PC-9 (cell line): ENCODE measurements at regions of chr1 and their contacts with region 1.

Region 1: DNA sequence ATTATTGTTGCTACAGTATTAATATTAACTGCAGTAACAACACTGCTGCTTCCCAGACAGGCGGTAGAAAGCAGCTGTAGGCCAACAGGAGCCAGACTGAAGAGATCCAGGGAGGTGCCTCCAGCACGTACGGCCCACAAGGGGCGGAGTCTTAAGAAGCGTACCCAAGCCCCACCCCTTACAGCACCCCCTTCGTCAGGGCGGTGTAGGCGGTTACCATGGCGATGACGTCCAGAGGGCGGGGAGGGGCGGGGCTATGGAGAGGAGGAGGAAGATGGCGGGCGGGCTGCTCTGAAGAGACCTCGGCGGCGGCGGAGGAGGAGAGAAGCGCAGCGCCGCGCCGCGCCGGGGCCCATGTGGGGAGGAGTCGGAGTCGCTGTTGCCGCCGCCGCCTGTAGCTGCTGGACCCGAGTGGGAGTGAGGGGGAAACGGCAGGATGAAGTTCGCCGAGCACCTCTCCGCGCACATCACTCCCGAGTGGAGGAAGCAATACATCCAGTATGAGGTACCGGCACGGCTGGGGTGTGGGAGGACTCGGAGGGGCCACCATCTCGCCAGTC is at the start of gene XPR1:
- DNase-seq: peak; percentile 92 to 96
- H3K4me3 ChIP-seq: peak within 1 kb of the TSS; percentile 73
- H3K27ac ChIP-seq: no peak within 1 kb of the TSS
- H3K4me1 ChIP-seq: peaks cover 14% of the 10 kb centered on the region
- H3K27me3 ChIP-seq: no peaks in the 10 kb centered on the region
- CTCF ChIP-seq: no peak
- total RNA-seq, gene XPR1: 10.4 and 16.8 TPM in 2 replicates

Region 2: DNA sequence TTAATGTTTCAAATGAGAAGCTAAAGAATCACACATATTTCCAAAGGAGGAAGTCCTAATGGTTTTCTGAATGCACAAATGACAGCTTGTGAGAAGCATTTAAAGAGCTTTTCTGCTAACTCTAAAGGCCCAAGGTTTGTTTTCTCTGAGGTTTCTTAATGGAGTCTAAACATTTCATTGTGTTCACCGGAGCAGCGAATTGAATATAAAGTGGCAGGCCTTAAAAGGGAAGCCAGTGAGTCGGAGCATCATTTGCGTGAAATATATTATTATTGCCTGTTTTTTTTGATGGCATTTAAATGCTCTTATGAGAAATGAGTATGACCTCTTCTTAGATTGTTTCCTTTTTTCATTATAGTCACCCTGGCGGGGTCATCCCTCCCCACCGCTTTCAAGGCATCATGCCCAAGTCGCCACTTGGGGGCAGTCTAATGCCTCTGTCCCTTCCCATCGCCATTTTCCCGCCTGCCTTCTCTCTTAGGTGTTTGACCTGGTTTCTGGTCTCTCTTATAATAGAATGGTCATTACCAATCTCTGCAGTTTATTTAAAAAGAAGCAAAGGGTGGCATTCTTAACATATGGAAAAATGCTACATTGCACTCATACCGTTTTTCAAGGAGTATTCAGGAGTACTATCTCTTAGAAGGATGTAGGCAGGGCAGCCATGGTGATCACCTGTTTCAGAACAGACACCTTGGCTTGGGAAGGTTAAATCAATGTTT is 98.4 kb before region 1 on chr1:
- CTCF ChIA-PET with region 1: interaction called, 3 read pairs
- POLR2A ChIA-PET with region 1: no interaction called
- intact Hi-C with region 1: loop called (anchors 5 kb)
- DNase-seq: peak in 1 of 2 experiments; percentile 51
- H3K4me3 ChIP-seq: no peak overlapping the region
- H3K27ac ChIP-seq: no peak overlapping the region
- H3K4me1 ChIP-seq: peaks cover 9% of the 10 kb centered on the region; the same call in 1 of the 2 replicates
- H3K27me3 ChIP-seq: no peaks in the 10 kb centered on the region
- CTCF ChIP-seq: peak; percentile 75

Region 3: GRCh38 chr1:180863158-180863775 is 231.4 kb after region 1 on chr1:
- CTCF ChIA-PET with region 1: no interaction called
- POLR2A ChIA-PET with region 1: no interaction called
- intact Hi-C with region 1: loop called (anchors 5 kb)
- DNase-seq: peak; percentile 31 to 52
- H3K4me3 ChIP-seq: no peak overlapping the region
- H3K27ac ChIP-seq: no peak overlapping the region
- H3K4me1 ChIP-seq: no peaks in the 10 kb centered on the region
- H3K27me3 ChIP-seq: no peaks in the 10 kb centered on the region
- CTCF ChIP-seq: peak; percentile 91

Region 4: GRCh38 chr1:180975551-180975950 is 343.7 kb after region 1 on chr1:
- CTCF ChIA-PET with region 1: no interaction called
- POLR2A ChIA-PET with region 1: no interaction called
- intact Hi-C with region 1: no loop called
- DNase-seq: no peak
- H3K4me3 ChIP-seq: no peak overlapping the region
- H3K27ac ChIP-seq: no peak overlapping the region
- H3K4me1 ChIP-seq: no peaks in the 10 kb centered on the region
- H3K27me3 ChIP-seq: no peaks in the 10 kb centered on the region
- CTCF ChIP-seq: no peak

Region 5: DNA sequence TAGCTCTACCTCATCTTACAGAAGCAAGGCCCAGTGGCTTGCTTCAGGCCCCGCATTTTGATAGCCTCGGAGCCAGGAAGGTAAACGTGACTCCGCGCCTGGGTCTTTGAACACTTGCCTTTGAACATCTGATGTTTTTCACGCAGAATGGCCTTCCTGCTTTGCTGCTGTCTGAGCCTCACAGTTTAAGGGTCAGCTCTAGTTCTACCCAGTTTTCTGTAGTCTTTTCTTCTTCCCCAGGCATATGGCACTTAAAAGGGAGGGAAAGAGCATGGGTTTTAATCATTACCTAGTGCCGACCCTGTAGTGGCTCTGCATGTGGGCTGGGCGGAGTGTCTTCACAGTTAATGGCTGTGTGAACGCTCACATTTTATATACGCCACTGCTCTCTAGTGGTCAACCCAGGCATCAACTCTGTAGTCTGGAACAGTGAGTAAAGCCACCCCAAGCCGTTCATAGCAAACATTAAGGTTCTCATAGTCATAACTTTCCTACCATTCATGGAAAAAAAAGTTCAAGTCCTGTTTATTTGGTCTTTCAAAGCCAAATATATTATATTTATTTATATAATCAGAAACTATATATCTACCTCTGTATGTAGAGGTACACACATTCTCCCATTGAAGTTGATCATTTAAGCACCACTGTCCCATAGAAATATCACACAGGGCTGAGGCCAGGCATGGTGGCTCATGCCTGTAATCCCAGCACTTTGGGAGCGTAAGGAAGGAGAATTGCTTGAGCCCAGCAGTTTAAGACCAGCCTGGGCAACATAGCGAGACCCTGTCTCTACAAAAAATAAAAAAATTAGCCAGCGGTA is 534.7 kb after region 1 on chr1:
- CTCF ChIA-PET with region 1: no interaction called
- POLR2A ChIA-PET with region 1: no interaction called
- intact Hi-C with region 1: loop called (anchors 5 kb)
- DNase-seq: peak; percentile 58 to 62
- H3K4me3 ChIP-seq: no peak overlapping the region
- H3K27ac ChIP-seq: no peak overlapping the region
- H3K4me1 ChIP-seq: no peaks in the 10 kb centered on the region
- H3K27me3 ChIP-seq: no peaks in the 10 kb centered on the region
- CTCF ChIP-seq: peak; percentile 88

Region 6: GRCh38 chr1:181356505-181357340 is 724.9 kb after region 1 on chr1:
- CTCF ChIA-PET with region 1: no interaction called
- POLR2A ChIA-PET with region 1: no interaction called
- intact Hi-C with region 1: no loop called
- DNase-seq: no peak
- H3K4me3 ChIP-seq: no peak overlapping the region
- H3K27ac ChIP-seq: no peak overlapping the region
- H3K4me1 ChIP-seq: no peaks in the 10 kb centered on the region
- H3K27me3 ChIP-seq: peaks cover 66% of the 10 kb centered on the region
- CTCF ChIP-seq: no peak